Ascending aorta (tissue), 2 donors: ENCODE measurements at regions of chr7 and their contacts with region 1.

Region 1: GRCh38 chr7:6160191-6160623 is 112.2 kb downstream of the CYTH3 start:
- DNase-seq: peak in 1 of 2 donors; percentile 84
- H3K4me3 ChIP-seq: no peak overlapping the region
- H3K27ac ChIP-seq: peak overlapping the region; percentile 92 to 96
- H3K4me1 ChIP-seq: peaks cover 5 to 24% of the 10 kb centered on the region in 2 donors
- H3K27me3 ChIP-seq: no peaks in the 10 kb centered on the region
- CTCF ChIP-seq: peak; percentile 63 to 82 (median 66)

Region 2: GRCh38 chr7:6175645-6176044 is 15.4 kb after region 1 on chr7:
- intact Hi-C with region 1: loop called (anchors 1 kb)
- DNase-seq: peak; percentile 55 to 90
- H3K4me3 ChIP-seq: no peak overlapping the region
- H3K27ac ChIP-seq: peak overlapping the region; percentile 81 to 87
- H3K4me1 ChIP-seq: peaks cover 14 to 59% of the 10 kb centered on the region in 2 donors
- H3K27me3 ChIP-seq: no peaks in the 10 kb centered on the region
- CTCF ChIP-seq: no peak

Region 3: GRCh38 chr7:6317797-6318438 is 157.7 kb after region 1 on chr7:
- intact Hi-C with region 1: loop called (anchors 1 kb)
- DNase-seq: peak; percentile 76 to 94
- H3K4me3 ChIP-seq: peak overlapping the region; percentile 29 to 49
- H3K27ac ChIP-seq: peak overlapping the region; percentile 82 to 85
- H3K4me1 ChIP-seq: peaks cover 3 to 25% of the 10 kb centered on the region in 2 donors
- H3K27me3 ChIP-seq: no peaks in the 10 kb centered on the region
- CTCF ChIP-seq: no peak

Region 4: DNA sequence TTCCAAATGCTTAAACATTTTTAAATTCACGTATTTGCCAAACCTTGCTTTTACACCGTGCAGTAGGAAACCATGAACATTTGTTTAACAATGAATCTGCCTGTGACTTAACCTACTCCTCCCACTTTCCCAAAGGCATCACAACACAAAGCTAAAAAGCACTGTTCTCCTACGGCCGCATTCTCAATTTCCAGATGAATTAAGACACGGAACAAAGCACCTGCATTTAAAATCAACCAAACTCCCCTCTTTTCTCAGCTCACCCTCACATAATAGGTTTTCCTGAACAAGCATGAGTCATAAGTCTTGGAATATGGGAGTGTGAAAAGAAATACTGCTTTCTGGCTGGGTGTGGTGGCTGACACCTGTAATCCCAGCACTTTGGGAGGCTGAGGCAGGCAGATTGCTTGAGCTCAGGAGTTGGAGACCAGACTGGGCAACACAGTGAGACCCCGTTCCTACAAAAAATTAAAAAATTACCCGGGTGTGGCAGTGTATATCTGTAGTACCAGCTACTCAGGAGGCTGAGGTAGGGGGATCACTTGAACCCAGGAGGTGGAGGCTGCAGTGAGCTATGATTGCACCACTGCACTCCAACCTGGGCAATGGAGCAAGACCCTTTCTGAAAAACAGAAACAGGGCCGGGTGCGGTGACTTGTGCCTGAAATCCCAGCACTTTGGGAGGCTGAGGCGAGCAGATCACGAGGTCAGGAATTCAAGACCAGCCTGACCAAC is 163.9 kb after region 1 on chr7:
- intact Hi-C with region 1: loop called (anchors 1 kb)
- DNase-seq: no peak
- H3K4me3 ChIP-seq: no peak overlapping the region
- H3K27ac ChIP-seq: no peak overlapping the region
- H3K4me1 ChIP-seq: no peaks in the 10 kb centered on the region
- H3K27me3 ChIP-seq: no peaks in the 10 kb centered on the region
- CTCF ChIP-seq: no peak

Region 5: DNA sequence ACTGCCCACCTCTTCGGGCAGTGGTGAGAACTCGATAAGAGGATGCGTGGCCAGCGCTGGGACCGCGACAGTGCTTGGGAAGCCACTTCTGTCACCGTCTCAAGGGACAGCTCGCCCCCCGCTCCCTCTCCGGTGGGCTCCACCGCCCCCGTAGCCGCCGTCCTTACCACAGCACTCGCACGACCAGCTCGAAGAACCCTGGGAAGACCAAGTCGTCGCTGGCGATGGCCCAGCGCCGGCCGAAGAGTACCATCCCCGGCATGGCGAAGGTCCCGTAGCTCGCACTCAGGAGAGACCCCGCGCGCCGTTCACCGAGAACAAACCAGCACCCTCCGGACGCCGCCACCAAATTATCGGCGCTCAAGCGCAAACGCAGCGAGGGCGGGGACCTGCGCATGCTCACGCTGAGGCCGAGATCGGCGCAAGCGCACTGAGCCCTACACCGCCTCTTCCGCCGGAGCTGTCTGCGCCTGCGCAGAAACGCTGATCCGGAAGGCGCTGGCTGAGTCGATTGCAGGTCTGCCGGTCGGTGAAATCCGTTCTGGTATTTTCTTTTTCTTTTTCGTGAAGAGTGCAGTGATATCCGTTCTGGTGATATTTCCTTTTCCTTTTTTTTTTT is 287.5 kb after region 1 on chr7 and contains the start of gene DAGLB:
- intact Hi-C with region 1: loop called (anchors 10 kb)
- DNase-seq: peak; percentile 53 to 93
- H3K4me3 ChIP-seq: peak within 1 kb of the TSS; percentile 89 to 98
- H3K27ac ChIP-seq: peak within 1 kb of the TSS; percentile 88 to 95
- H3K4me1 ChIP-seq: peaks cover 0 to 4% of the 10 kb centered on the region in 2 donors
- H3K27me3 ChIP-seq: no peaks in the 10 kb centered on the region
- CTCF ChIP-seq: no peak
- total RNA-seq, gene DAGLB: 5.2 TPM